HEK293 (cell line): ENCODE measurements at regions of chr5 and their contacts with region 1.

Region 1: DNA sequence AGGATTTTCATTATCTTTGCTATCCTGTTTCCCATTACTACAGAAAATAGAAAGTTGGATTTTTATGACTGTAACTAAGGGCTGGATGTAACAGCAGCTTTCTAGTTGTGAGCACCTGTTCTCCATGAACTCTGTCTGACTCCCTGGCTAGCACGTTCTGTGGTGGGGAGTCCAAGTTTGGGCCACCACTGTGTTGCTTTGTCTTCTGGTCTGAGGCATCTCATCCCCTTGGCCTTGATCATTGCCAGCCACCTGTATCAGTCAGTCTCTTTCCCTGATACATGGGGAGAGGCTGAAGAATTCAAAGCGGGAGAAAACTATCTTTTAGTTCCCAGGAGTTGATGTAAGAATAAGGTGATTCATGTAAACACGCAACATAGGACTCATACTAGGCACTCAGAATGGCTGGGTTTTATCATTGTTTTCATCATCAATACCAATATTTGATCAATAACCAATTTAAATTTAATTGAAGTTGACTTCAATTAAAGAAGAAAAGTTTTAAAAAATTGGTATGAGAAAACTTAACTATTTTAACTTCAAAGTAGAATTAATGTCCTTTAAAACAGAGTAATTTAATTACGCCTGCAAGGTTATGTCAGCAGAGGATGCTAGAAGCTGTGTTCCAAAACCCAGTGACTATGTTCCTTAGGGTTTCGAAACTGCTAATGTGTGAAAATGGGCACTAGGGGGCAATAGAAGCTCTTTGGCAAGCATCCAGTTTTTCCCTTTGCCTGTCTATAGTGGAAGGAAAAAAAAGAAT is 33.6 kb downstream of the WDR70 start:
- H3K4me3 ChIP-seq: no peak overlapping the region
- H3K27ac ChIP-seq: no peak overlapping the region
- H3K4me1 ChIP-seq: no peaks in the 10 kb centered on the region
- CTCF ChIP-seq: peak; percentile 87

Region 2: GRCh38 chr5:37400501-37400900 is 12.2 kb before region 1 on chr5:
- CTCF ChIA-PET with region 1: interaction called, 19 read pairs
- POLR2A ChIA-PET with region 1: no interaction called
- H3K4me3 ChIP-seq: no peak overlapping the region
- H3K27ac ChIP-seq: no peak overlapping the region
- H3K4me1 ChIP-seq: no peaks in the 10 kb centered on the region
- CTCF ChIP-seq: no peak

Region 3: DNA sequence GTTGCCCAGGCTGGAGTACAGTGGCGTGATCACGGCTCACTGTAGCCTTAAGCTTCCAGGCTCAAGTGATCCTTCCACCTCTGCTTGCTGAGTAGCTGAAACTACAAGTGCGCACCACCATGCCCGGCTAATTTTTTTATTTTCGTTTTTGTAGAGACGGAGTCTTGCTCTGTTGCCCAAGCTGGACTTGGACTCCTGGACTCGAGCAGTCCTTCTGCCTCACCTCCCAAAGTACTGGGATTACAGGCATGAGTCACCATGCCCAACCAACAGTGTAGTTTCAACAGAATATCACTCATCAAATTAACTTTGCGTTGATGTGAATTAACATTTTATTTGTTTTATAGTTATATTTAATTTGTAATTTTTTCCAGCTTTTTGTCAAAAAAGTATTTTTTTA is 11.7 kb after region 1 on chr5:
- CTCF ChIA-PET with region 1: interaction called, 14 read pairs
- POLR2A ChIA-PET with region 1: no interaction called
- H3K4me3 ChIP-seq: no peak overlapping the region
- H3K27ac ChIP-seq: no peak overlapping the region
- H3K4me1 ChIP-seq: no peaks in the 10 kb centered on the region
- CTCF ChIP-seq: no peak

Region 4: GRCh38 chr5:37576552-37576951 is 163.9 kb after region 1 on chr5:
- CTCF ChIA-PET with region 1: interaction called, 11 read pairs
- POLR2A ChIA-PET with region 1: no interaction called
- H3K4me3 ChIP-seq: no peak overlapping the region
- H3K27ac ChIP-seq: no peak overlapping the region
- H3K4me1 ChIP-seq: no peaks in the 10 kb centered on the region; the same call in 1 of the 2 replicates
- CTCF ChIP-seq: no peak

Region 5: GRCh38 chr5:37757980-37758583 is 345.4 kb after region 1 on chr5:
- CTCF ChIA-PET with region 1: interaction called, 10 read pairs
- POLR2A ChIA-PET with region 1: no interaction called
- H3K4me3 ChIP-seq: no peak overlapping the region
- H3K27ac ChIP-seq: no peak overlapping the region
- H3K4me1 ChIP-seq: no peaks in the 10 kb centered on the region
- CTCF ChIP-seq: no peak

Region 6: GRCh38 chr5:38193015-38193581 is 780.4 kb after region 1 on chr5:
- CTCF ChIA-PET with region 1: interaction called, 49 read pairs
- POLR2A ChIA-PET with region 1: no interaction called
- H3K4me3 ChIP-seq: no peak overlapping the region
- H3K27ac ChIP-seq: no peak overlapping the region
- H3K4me1 ChIP-seq: 0 out of 2 replicates have a peak, but pooled peaks cover 7% of the 10 kb centered on the region
- CTCF ChIP-seq: peak; percentile 87